Gastrocnemius medialis (tissue), 4 donors: ENCODE measurements at regions of chr5 and their contacts with region 1.

Region 1: DNA sequence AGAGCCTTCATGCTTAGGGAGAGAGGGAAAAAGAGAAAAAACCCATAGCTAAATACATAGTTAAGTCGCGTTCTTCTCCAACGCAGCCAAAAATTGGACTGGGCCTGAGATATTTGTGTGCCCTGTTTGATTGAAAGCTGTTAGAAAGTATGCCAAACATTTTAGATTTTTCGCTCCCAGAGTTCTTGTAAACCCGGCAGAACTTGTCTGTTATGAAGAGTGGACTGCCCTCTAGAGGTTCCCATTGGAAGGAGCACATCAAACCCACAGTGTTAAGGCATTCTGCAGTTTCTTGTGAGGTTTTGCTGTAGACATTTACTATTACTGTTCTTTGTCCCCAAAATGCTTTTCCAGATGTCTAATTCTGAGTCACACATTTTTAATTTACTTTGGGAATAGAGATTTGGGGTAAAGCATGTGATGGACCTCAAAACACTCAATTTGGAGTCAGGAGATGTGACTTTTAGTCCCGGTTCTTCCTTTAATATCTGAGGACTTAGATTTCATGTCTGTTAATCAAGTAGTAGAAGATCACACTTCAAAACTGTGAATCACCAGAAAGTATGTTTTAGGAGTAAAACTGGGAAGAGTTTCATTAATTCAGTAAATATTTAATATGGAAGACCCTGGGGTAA is 96.6 kb downstream of the PCSK1 start:
- DNase-seq: peak; percentile 63 to 75
- ATAC-seq: peak; percentile 71
- H3K4me3 ChIP-seq: peak overlapping the region in 2 of 4 donors; percentile 8 to 13
- H3K27ac ChIP-seq: peak overlapping the region; percentile 77 to 89 (median 85)
- H3K4me1 ChIP-seq: peaks cover 32 to 46% of the 10 kb centered on the region in 2 donors
- H3K27me3 ChIP-seq: no peaks in the 10 kb centered on the region
- CTCF ChIP-seq: peak; percentile 48 to 89 (median 79)
- POLR2A ChIP-seq: no peak

Region 2: DNA sequence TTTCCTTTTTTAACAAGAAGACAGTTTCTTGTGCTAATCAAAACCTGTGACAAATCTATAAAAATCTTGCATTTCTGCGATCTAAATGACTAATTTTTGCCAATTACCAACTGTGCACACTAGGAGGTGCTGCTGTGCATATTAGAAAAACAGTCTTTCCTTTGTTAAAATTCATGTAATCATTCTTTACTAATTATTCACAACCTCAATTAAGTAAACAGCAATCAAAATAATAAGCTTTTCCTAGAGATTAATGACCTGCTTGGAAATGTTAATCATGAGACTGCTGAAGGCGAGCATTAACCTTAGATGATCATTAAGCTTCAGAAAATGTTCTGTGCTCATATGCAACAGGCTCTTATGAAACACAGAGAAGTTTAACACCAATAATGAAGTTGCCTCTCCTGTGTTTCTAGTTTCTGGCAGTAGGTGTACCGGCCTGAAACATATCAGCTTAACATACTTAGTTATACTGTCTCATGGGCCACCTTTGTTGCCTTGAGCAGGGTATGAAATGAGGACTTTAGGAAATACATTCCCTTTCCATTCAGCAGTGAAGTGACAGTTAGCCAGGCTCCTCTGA is 672.2 kb before region 1 on chr5:
- in situ Hi-C with region 1: loop called in 3 of 4 experiments (anchors 10 to 25 kb)
- intact Hi-C with region 1: no loop called
- DNase-seq: no peak
- ATAC-seq: peak in 1 of 2 donors; percentile 64
- H3K4me3 ChIP-seq: no peak overlapping the region
- H3K27ac ChIP-seq: peak overlapping the region in 3 of 4 donors; percentile 6 to 54 (median 44)
- H3K4me1 ChIP-seq: peaks cover 9 to 12% of the 10 kb centered on the region in 2 donors
- H3K27me3 ChIP-seq: no peaks in the 10 kb centered on the region
- CTCF ChIP-seq: peak; percentile 60 to 94 (median 79)
- POLR2A ChIP-seq: no peak

Region 3: DNA sequence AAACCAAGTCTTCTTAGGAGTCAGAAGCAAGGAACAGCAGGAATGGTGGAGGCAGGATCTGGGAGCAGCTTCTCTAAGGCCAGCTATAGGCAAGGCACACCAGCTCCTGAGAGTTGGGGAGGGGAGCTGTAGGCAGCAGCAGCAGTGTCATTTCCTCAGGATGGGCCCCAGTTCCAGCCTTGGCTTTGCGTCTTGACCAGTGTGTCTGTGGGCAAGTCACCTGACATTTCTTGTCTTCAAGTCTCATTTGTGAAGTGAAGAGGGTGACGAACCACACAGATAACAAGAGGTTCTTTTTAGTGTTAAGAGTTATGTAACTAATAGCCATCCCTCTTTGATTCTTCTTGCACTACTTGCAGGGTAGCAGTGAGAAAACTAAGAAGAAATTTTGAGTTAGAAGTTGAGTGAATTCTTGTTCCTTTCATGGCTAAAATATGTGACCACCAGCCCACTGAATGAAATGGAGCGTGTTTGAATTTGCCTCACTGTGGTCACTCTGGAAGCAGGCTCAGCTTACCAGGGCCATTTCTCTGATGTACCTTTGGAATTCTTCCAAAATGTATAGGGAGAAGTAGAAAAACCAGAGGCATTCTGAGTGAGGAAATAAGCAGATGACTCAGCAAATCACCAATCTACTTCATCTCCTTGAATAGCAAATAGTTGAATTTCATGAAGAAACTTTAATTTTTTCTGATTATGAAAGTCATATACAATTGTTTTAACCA is 563.0 kb before region 1 on chr5:
- in situ Hi-C with region 1: loop called in 3 of 4 experiments (anchors 10 to 25 kb)
- intact Hi-C with region 1: no loop called
- DNase-seq: no peak
- ATAC-seq: no peak
- H3K4me3 ChIP-seq: no peak overlapping the region
- H3K27ac ChIP-seq: peak overlapping the region in 3 of 4 donors; percentile 2 to 33 (median 4)
- H3K4me1 ChIP-seq: peaks cover 9 to 41% of the 10 kb centered on the region in 2 donors
- H3K27me3 ChIP-seq: no peaks in the 10 kb centered on the region
- CTCF ChIP-seq: no peak
- POLR2A ChIP-seq: no peak

Region 4: GRCh38 chr5:95858661-95859326 is 477.7 kb before region 1 on chr5:
- in situ Hi-C with region 1: loop called (anchors 5 to 10 kb)
- intact Hi-C with region 1: loop called (anchors 1 kb)
- DNase-seq: peak; percentile 88 to 92
- ATAC-seq: peak; percentile 35 to 37
- H3K4me3 ChIP-seq: peak overlapping the region; percentile 5 to 36 (median 12)
- H3K27ac ChIP-seq: peak overlapping the region; percentile 86 to 94 (median 89)
- H3K4me1 ChIP-seq: peaks cover 70 to 76% of the 10 kb centered on the region in 2 donors
- H3K27me3 ChIP-seq: no peaks in the 10 kb centered on the region
- CTCF ChIP-seq: peak; percentile 98 to 100 (median 99)
- POLR2A ChIP-seq: peak; percentile 29 to 58

Region 5: GRCh38 chr5:96209829-96210228 is 126.6 kb before region 1 on chr5:
- in situ Hi-C with region 1: no loop called
- intact Hi-C with region 1: no loop called
- DNase-seq: no peak
- ATAC-seq: no peak
- H3K4me3 ChIP-seq: no peak overlapping the region
- H3K27ac ChIP-seq: no peak overlapping the region
- H3K4me1 ChIP-seq: no peaks in the 10 kb centered on the region
- H3K27me3 ChIP-seq: no peaks in the 10 kb centered on the region
- CTCF ChIP-seq: no peak
- POLR2A ChIP-seq: no peak

Region 6: GRCh38 chr5:98041661-98042060 is 1705.2 kb after region 1 on chr5:
- in situ Hi-C with region 1: no loop called
- intact Hi-C with region 1: no loop called
- DNase-seq: no peak
- ATAC-seq: no peak
- H3K4me3 ChIP-seq: no peak overlapping the region
- H3K27ac ChIP-seq: no peak overlapping the region
- H3K4me1 ChIP-seq: no peaks in the 10 kb centered on the region
- H3K27me3 ChIP-seq: no peaks in the 10 kb centered on the region
- CTCF ChIP-seq: no peak
- POLR2A ChIP-seq: no peak